ENCODE measurements at regions of chr5 and their contacts with region 1.

Region 1: DNA sequence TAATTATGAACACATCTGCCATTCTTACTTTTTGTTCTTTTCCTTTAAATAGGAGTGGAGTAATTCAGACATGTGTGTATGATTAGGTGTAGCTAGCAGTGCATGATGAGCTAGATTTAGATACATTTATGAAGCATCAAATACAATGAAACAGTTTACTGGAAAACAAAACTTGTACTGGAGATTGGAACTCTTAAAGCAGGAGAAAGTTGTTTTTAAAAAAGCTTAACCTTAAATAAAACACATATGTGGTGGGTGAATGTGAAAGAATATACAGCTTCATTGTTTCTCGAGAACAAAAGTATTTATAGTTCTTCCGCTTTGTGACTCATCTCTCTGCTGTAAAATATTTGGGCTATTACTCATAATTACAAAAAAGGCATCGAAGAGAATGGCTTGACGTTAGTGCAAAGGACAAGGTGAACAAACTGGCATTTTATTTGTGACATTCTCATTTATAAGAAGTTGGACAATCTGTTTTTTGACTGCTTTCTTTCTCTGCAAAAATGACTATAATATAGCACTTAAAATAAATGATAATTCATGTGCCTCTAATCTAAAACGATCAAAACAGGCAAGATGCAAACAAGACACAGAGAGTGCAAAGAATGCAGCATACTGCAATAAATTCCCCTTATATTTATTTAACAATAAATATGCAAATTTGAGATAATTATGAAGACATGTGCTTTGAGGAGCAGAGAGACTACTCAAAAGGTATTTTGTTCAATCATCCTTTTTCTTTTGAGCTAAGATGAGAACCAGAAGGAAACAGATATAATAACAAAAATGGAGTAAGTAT is 478.8 kb downstream of the CETN3 start:
- DNase-seq: peak in 1 of 2 experiments; percentile 11
- H3K4me3 ChIP-seq: no peak overlapping the region
- H3K4me3 Mint-ChIP-seq: peak overlapping the region; percentile 52
- H3K27ac Mint-ChIP-seq: peak overlapping the region; percentile 58
- H3K4me1 ChIP-seq: peaks cover 24% of the 10 kb centered on the region
- H3K4me1 Mint-ChIP-seq: peaks cover 19% of the 10 kb centered on the region
- H3K27me3 ChIP-seq: no peaks in the 10 kb centered on the region
- H3K27me3 Mint-ChIP-seq: no peaks in the 10 kb centered on the region
- CTCF ChIP-seq: no peak

Region 2: GRCh38 chr5:89849830-89850512 is 80.8 kb before region 1 on chr5:
- CTCF ChIA-PET with region 1: no interaction called
- POLR2A ChIA-PET with region 1: no interaction called
- intact Hi-C with region 1: no loop called
- DNase-seq: no peak
- H3K4me3 ChIP-seq: no peak overlapping the region
- H3K4me3 Mint-ChIP-seq: no peak overlapping the region
- H3K27ac Mint-ChIP-seq: no peak overlapping the region
- H3K4me1 ChIP-seq: peaks cover 7% of the 10 kb centered on the region; the same call in 1 of the 2 replicates
- H3K4me1 Mint-ChIP-seq: peaks cover 7% of the 10 kb centered on the region
- H3K27me3 ChIP-seq: no peaks in the 10 kb centered on the region
- H3K27me3 Mint-ChIP-seq: no peaks in the 10 kb centered on the region
- CTCF ChIP-seq: no peak

Region 3: GRCh38 chr5:90119531-90120006 is 188.8 kb after region 1 on chr5:
- CTCF ChIA-PET with region 1: no interaction called
- POLR2A ChIA-PET with region 1: no interaction called
- intact Hi-C with region 1: loop called (anchors 2 kb)
- DNase-seq: peak in 1 of 2 experiments; percentile 30
- H3K4me3 ChIP-seq: no peak overlapping the region
- H3K4me3 Mint-ChIP-seq: no peak overlapping the region
- H3K27ac Mint-ChIP-seq: no peak overlapping the region
- H3K4me1 ChIP-seq: peaks cover 13% of the 10 kb centered on the region
- H3K4me1 Mint-ChIP-seq: peaks cover 5% of the 10 kb centered on the region
- H3K27me3 ChIP-seq: no peaks in the 10 kb centered on the region
- H3K27me3 Mint-ChIP-seq: no peaks in the 10 kb centered on the region
- CTCF ChIP-seq: no peak

Region 4: GRCh38 chr5:90201923-90202322 is 271.1 kb after region 1 on chr5:
- CTCF ChIA-PET with region 1: no interaction called
- POLR2A ChIA-PET with region 1: no interaction called
- intact Hi-C with region 1: no loop called
- DNase-seq: no peak
- H3K4me3 ChIP-seq: no peak overlapping the region
- H3K4me3 Mint-ChIP-seq: no peak overlapping the region
- H3K27ac Mint-ChIP-seq: no peak overlapping the region
- H3K4me1 ChIP-seq: no peaks in the 10 kb centered on the region
- H3K4me1 Mint-ChIP-seq: peaks cover 8% of the 10 kb centered on the region
- H3K27me3 ChIP-seq: no peaks in the 10 kb centered on the region
- H3K27me3 Mint-ChIP-seq: no peaks in the 10 kb centered on the region
- CTCF ChIP-seq: no peak

Measured in Caco-2 (cell line).